ENCODE measurements at regions of chr7 and their contacts with region 1.

Region 1: DNA sequence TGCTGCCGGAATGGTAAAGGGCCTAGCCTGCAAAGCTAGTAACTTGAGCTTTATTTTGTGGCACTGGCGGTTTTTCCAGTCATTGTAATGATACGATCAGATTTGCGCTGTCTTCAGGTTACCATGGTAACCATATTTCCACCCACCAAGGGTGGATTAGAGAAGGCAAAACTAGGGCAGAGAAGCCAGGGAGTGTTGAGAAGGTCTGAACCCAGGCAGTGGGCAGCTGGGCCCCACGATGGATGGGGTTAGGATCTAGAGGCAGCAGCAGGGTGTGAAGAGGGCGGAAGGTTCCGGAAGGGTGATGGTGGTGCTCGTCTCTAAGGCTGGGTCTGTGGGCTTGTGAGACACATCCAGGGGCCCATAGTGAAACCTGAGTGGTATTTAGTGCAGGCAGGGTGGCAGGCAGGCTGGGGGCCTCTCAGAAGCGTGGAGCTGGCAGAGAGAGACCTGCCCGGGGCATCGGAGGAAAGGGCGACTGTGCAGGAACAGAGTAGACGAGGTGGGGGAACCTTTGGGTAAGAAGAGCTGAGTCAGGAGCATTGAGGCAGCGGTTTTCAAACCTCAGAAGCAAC is 87.9 kb upstream of the GTF2I start:
- DNase-seq: no peak
- ATAC-seq: no peak
- H3K4me3 ChIP-seq: no peak overlapping the region
- H3K27ac ChIP-seq: no peak overlapping the region
- H3K4me1 ChIP-seq: no peaks in the 10 kb centered on the region
- H3K27me3 ChIP-seq: no peaks in the 10 kb centered on the region

Region 2: GRCh38 chr7:74417419-74417971 is 152.1 kb before region 1 on chr7:
- intact Hi-C with region 1: loop called (anchors 2 to 5 kb)
- DNase-seq: peak; percentile 73 to 88
- ATAC-seq: peak; percentile 94
- H3K4me3 ChIP-seq: no peak overlapping the region
- H3K27ac ChIP-seq: no peak overlapping the region
- H3K4me1 ChIP-seq: no peaks in the 10 kb centered on the region
- H3K27me3 ChIP-seq: no peaks in the 10 kb centered on the region

Region 3: DNA sequence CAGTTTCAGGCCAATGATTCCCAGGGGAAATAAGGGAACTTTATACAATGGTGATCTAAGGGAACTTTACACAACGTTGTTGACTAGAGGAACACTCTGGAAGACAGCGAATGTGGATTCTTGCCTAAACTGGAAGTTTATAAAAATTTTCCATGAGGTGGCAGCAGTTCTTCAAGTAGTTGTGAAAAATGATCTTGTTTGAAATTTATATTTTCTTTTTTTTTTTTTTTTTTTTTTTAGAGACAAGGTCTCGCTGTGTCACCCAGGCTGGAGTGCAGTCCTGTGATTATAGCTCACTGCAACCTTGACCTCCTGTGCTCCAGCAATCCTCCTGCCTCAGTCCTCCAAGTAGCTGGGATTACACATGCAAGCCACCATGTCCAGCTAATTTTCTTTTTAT is 55.9 kb after region 1 on chr7:
- intact Hi-C with region 1: no loop called
- DNase-seq: no peak
- ATAC-seq: peak; percentile 75
- H3K4me3 ChIP-seq: no peak overlapping the region
- H3K27ac ChIP-seq: no peak overlapping the region
- H3K4me1 ChIP-seq: no peaks in the 10 kb centered on the region
- H3K27me3 ChIP-seq: no peaks in the 10 kb centered on the region